Activated CD4-positive, alpha-beta T cell treated with anti-CD3 and anti-CD28 coated beads for 36 hours (primary cell): ENCODE measurements at regions of chr2 and their contacts with region 1.

Region 1: DNA sequence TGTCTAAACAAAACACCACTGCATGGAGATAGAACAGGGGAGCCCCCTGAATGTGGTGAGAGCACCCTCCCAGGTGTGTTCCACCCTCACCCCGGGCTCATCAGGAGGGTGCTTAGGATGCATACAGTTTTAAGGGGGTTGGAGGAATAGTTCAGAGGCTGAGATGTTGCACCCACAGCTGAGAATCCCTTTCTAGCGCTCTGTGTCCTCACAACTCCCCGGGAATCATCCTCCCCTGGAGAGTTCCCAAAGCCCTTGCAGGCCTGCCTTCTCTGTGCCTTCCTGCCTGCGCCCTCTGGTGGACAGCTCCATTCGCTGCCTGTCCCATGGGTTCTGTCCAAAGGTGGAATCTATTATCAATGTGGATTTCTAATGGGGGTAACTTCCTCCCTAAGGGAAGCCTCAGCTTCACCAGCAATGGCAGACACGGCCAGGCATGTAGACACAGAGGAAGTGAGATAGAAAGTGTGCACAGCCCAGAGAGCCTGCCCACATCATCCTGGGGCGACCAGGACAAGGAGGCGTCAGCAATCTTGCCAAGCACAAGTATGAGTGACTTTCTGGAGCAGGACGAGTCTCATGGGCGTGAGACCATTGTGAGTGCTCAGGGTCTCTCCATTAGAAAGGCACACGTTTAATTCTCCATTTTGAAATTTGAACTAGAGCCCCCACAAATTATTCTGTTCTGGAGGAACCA is 1.2 kb upstream of the UGT1A5 start:
- DNase-seq: peak; percentile 86
- ATAC-seq: peak; percentile 61
- H3K4me3 Mint-ChIP-seq: no peak overlapping the region
- H3K27ac Mint-ChIP-seq: no peak overlapping the region
- H3K4me1 Mint-ChIP-seq: no peaks in the 10 kb centered on the region
- H3K27me3 Mint-ChIP-seq: peaks cover 25% of the 10 kb centered on the region

Region 2: GRCh38 chr2:233303252-233303651 is 408.2 kb before region 1 on chr2:
- CTCF ChIA-PET with region 1: no interaction called
- POLR2A ChIA-PET with region 1: no interaction called
- intact Hi-C with region 1: loop called in 1 of 2 experiments (anchors 10 kb)
- DNase-seq: no peak
- ATAC-seq: no peak
- H3K4me3 Mint-ChIP-seq: no peak overlapping the region
- H3K27ac Mint-ChIP-seq: no peak overlapping the region
- H3K4me1 Mint-ChIP-seq: no peaks in the 10 kb centered on the region
- H3K27me3 Mint-ChIP-seq: no peaks in the 10 kb centered on the region

Region 3: DNA sequence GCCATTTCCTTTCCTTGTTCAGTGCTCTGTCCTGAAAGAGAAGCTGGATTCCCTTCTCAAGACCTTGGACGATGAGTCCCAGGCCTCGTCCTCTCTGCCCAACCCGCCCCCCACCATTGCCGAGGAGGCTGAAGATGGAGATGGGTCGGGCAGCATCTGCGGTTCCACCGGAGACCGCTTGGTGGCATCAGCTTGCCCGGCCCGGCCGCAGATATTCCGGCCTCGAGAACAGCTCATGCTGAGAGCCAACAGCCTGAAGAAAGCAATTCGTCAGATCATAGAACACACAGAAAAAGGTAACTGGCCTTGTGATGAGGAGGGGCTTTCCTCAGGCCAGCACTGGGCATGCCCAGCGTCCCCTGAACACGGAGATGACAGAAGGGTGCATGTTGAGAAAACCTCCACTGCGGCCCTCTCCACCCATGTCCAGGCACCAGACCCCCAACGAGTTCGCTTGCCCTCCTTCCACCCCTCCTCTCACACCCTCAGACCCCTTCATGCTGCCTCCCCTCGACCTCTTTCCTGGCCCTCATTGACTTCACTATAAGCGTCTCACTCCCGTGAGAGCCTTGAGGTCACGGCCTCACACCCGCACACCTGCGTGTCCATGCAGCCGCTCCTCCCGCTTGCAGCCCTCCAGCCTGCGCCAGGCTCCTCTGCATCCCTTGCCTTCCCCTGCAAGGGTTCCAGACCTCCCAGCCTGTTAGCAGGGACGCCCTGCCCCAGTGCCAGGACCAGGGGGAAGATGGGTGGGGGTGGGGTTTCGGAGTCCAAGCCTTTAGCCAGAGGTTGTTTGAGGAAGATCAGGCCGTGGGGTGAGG is 262.2 kb before region 1 on chr2:
- CTCF ChIA-PET with region 1: no interaction called
- POLR2A ChIA-PET with region 1: no interaction called
- intact Hi-C with region 1: no loop called
- DNase-seq: no peak
- ATAC-seq: no peak
- H3K4me3 Mint-ChIP-seq: no peak overlapping the region
- H3K27ac Mint-ChIP-seq: no peak overlapping the region
- H3K4me1 Mint-ChIP-seq: no peaks in the 10 kb centered on the region
- H3K27me3 Mint-ChIP-seq: no peaks in the 10 kb centered on the region